Activated CD4-positive, alpha-beta T cell treated with anti-CD3 and anti-CD28 coated beads for 36 hours (primary cell): ENCODE measurements at regions of chr2 and their contacts with region 1.

Region 1: DNA sequence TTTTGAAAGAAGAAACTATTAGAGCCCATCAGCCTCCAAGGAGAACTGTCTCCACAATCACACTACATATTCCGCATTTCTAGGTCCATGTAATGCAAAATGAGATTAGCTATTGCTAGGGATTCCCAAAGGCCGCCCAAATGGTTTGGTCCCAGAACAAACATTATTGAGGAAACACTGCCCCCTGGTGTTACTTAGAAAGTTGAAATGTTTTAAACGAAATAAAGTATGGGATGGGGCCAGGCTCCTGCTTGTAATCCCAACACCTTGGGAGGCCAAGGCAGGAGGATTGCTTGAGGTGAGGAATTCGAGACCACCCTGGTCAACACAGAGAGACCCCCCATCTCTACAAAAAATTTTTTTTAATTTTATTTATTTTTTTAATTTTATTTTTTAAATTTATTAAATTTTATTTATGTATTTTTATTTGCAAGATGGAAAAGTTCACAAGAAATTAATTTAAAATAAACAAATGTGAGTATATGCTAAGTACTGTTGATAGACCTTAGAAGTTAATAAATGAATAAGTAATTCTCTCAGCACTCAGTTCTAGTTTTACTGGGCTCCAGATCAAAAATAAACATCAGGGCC is 5.5 kb downstream of the NHEJ1 start:
- DNase-seq: peak; percentile 47
- ATAC-seq: peak; percentile 47
- H3K4me3 Mint-ChIP-seq: no peak overlapping the region
- H3K27ac Mint-ChIP-seq: no peak overlapping the region
- H3K4me1 Mint-ChIP-seq: peaks cover 6% of the 10 kb centered on the region
- H3K27me3 Mint-ChIP-seq: no peaks in the 10 kb centered on the region

Region 2: GRCh38 chr2:218979846-218980734 is 175.1 kb before region 1 on chr2:
- CTCF ChIA-PET with region 1: interaction called, 11 read pairs
- POLR2A ChIA-PET with region 1: no interaction called
- intact Hi-C with region 1: loop called in 1 of 2 experiments (anchors 1 kb)
- DNase-seq: peak; percentile 93
- ATAC-seq: peak; percentile 90
- H3K4me3 Mint-ChIP-seq: peak overlapping the region; percentile 43
- H3K27ac Mint-ChIP-seq: no peak overlapping the region
- H3K4me1 Mint-ChIP-seq: peaks cover 28% of the 10 kb centered on the region
- H3K27me3 Mint-ChIP-seq: peaks cover 56% of the 10 kb centered on the region

Region 3: GRCh38 chr2:219029829-219030165 is 125.4 kb before region 1 on chr2:
- CTCF ChIA-PET with region 1: interaction called, 44 read pairs
- POLR2A ChIA-PET with region 1: no interaction called
- intact Hi-C with region 1: loop called (anchors 1 kb)
- DNase-seq: peak; percentile 88
- ATAC-seq: peak; percentile 98
- H3K4me3 Mint-ChIP-seq: no peak overlapping the region
- H3K27ac Mint-ChIP-seq: no peak overlapping the region
- H3K4me1 Mint-ChIP-seq: no peaks in the 10 kb centered on the region
- H3K27me3 Mint-ChIP-seq: peaks cover 11% of the 10 kb centered on the region

Region 4: GRCh38 chr2:219104107-219105035 is 50.8 kb before region 1 on chr2:
- CTCF ChIA-PET with region 1: interaction called, 10 read pairs
- POLR2A ChIA-PET with region 1: no interaction called
- intact Hi-C with region 1: no loop called
- DNase-seq: peak; percentile 36
- ATAC-seq: peak; percentile 80
- H3K4me3 Mint-ChIP-seq: no peak overlapping the region
- H3K27ac Mint-ChIP-seq: peak overlapping the region; percentile 44
- H3K4me1 Mint-ChIP-seq: peaks cover 33% of the 10 kb centered on the region
- H3K27me3 Mint-ChIP-seq: no peaks in the 10 kb centered on the region

Region 5: DNA sequence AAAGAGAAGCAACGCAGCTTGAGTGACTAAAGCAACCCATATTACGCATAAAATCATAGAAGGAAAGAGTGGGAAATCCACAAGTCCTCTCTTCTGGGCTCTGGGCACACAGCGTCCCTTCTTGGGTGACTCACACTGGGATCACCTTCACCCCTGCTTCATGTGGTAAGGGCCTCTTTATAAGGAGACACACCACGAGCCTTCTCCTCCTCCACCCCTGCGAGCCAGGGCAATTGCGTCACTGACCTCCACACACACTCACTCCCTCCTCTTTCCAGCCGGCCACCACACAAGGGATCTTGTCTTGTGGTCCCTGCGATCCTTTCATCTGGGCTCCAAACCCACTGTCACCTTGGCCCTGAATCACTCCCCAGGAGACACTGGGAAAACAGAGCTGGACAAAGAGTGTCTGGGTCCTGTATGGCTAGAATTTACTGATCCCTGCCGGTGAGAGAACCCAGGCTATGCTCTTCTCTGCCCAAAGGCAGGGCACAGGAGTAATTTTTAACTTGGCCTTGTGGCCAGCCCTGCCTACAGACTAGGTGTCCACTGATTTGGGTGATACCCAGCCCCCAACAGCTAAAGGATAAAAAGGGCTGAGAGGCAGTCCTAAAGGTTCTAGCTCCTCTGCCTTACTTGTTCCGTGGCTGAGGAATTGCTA is 29.8 kb before region 1 on chr2:
- CTCF ChIA-PET with region 1: interaction called, 13 read pairs
- POLR2A ChIA-PET with region 1: no interaction called
- intact Hi-C with region 1: no loop called
- DNase-seq: peak; percentile 26
- ATAC-seq: peak; percentile 70
- H3K4me3 Mint-ChIP-seq: no peak overlapping the region
- H3K27ac Mint-ChIP-seq: no peak overlapping the region
- H3K4me1 Mint-ChIP-seq: peaks cover 18% of the 10 kb centered on the region
- H3K27me3 Mint-ChIP-seq: no peaks in the 10 kb centered on the region

Region 6: DNA sequence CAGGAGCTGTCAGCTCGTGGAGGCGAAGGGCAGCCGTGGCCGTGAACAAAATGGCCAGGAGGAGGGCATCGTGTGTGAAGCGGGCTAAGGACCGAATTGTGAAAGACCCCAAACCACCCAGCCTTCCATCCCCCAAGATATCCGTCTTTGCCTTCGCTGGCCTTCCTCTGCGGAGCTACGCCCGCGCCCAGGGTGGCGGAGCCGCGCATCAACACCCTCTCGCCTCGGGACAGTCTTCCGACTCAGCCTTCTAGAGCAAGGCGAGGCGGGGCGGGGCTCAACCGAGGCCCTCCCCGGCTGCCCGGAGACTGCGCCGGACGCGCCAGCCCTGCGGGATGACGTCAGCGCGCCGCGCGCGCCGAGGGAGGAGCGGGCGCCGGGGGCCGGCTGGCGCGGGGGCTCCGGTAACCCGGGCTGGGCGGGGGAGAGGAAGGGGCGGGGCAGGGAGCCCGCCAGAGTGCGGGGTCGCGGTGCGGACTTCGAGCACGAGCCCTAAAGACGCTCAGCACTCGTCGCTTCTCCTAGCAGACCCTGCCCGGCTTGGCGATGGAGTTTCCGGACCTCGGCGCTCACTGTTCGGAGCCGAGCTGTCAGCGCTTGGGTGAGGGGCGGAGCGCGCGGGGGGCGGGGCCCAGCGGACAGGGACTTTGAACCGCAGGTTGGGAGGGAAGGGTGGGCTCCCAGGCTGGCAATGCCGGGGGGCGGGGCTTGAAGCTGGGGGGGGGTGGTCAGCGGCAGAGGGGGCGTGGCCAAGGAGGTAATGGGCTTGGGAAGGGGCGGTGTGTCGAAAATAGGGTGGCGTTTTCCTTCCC is 51.5 kb after region 1 on chr2 and contains the start of gene ZFAND2B:
- CTCF ChIA-PET with region 1: interaction called, 8 read pairs
- POLR2A ChIA-PET with region 1: interaction called, 14 read pairs
- intact Hi-C with region 1: loop called (anchors 1 kb)
- DNase-seq: peak; percentile 98
- ATAC-seq: peak; percentile 96
- H3K4me3 Mint-ChIP-seq: peak within 1 kb of the TSS; percentile 86
- H3K27ac Mint-ChIP-seq: peak within 1 kb of the TSS; percentile 94
- H3K4me1 Mint-ChIP-seq: peaks cover 34% of the 10 kb centered on the region
- H3K27me3 Mint-ChIP-seq: no peaks in the 10 kb centered on the region
- total RNA-seq, gene ZFAND2B: 21.5 to 27.6 TPM

Region 7: DNA sequence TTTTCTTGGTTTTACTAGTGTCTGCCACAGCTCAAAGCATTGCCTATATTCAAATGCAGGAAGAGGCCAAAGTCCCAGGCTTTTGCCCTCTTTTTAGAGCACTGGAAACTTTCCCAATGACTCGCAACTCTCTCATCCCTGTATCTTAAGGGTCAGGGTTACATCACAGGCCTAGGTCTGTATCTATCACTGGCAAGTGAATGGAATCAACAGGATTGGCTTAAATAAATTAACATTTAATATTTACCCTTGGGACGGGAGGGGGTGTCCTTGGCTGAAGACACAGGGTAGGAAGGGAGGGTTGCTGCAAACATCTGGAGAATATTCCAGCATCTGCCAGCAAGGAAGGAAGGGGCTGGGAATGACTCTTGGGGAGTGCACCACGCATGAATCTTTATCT is 714.9 kb after region 1 on chr2:
- CTCF ChIA-PET with region 1: no interaction called
- POLR2A ChIA-PET with region 1: no interaction called
- intact Hi-C with region 1: no loop called
- DNase-seq: no peak
- ATAC-seq: no peak
- H3K4me3 Mint-ChIP-seq: no peak overlapping the region
- H3K27ac Mint-ChIP-seq: no peak overlapping the region
- H3K4me1 Mint-ChIP-seq: no peaks in the 10 kb centered on the region
- H3K27me3 Mint-ChIP-seq: peaks cover 3% of the 10 kb centered on the region

Region 8: GRCh38 chr2:219919506-219919905 is 764.4 kb after region 1 on chr2:
- CTCF ChIA-PET with region 1: no interaction called
- POLR2A ChIA-PET with region 1: no interaction called
- intact Hi-C with region 1: no loop called
- DNase-seq: no peak
- ATAC-seq: no peak
- H3K4me3 Mint-ChIP-seq: no peak overlapping the region
- H3K27ac Mint-ChIP-seq: no peak overlapping the region
- H3K4me1 Mint-ChIP-seq: no peaks in the 10 kb centered on the region
- H3K27me3 Mint-ChIP-seq: peaks cover 9% of the 10 kb centered on the region